GM12878 (cell line): ENCODE measurements at regions of chr5 and their contacts with region 1.

Region 1: DNA sequence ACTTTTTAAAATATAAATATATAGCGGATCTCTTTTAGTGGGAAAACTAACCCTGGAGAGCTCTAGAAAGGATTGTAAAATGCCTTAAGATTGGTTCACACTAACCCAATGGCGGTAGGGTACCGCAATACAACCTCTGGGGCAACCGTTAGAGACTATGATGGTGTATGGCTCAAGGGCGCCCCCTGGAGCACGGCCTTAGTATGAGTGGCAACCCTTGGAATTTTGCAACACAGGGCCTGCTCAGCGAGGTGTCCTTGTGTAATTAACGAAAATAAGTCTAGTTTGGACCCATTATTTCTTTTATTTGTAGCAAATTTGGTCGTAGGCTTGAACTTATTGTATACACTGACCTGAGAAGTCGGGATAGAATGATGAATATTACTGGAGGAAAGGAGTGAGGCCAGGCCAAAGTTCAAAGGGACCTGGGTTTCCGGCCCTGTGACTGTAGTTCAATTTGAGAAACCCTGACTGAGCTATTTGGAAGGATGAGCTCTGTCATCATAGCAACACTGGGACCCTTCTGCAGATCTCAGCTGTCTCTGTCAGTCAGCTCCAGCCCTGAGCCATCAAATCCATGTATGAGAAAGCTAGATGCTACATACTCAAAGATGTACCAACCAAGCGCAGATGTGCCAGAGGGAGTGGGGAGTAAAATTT is 54.8 kb downstream of the CAMK4 start:
- DNase-seq: peak; percentile 33
- ATAC-seq: peak; percentile 97
- H3K4me3 ChIP-seq: no peak overlapping the region
- H3K27ac ChIP-seq: no peak overlapping the region
- H3K4me1 ChIP-seq: 0 out of 2 replicates have a peak, but pooled peaks cover 4% of the 10 kb centered on the region
- H3K27me3 ChIP-seq: no peaks in the 10 kb centered on the region
- CTCF ChIP-seq: peak; percentile 76 to 93 (median 79)
- EP300 ChIP-seq: no peak
- POLR2A ChIP-seq: no peak
- RAD21 ChIP-seq: peak; percentile 80

Region 2: DNA sequence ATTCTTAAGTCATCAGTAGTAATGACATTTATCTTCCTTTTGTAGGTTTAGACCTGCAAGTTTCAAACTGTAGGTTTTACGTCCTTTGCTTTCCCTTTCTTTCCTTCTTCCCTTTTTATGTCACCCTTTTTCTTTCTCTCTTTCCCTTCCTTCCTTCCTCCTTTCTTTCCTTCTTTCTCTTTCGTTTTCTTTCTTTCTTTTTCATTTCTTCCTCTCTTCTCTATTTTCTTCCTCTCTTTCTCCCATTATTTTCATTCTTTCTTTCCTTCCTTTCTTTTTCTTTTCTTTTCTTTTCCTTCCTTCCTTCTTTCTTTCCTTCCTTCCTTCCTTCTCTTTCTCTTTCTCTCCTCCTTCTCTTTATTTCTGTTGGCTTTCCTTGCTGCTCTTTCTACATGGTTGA is 127.0 kb before region 1 on chr5:
- CTCF ChIA-PET with region 1: interaction called, 339 read pairs
- POLR2A ChIA-PET with region 1: no interaction called
- RAD21 ChIA-PET with region 1: interaction called, 198 read pairs
- SMC1A ChIA-PET with region 1: interaction called, 324 read pairs
- in situ Hi-C with region 1: no loop called
- intact Hi-C with region 1: no loop called
- DNase-seq: no peak
- ATAC-seq: no peak
- H3K4me3 ChIP-seq: no peak overlapping the region
- H3K27ac ChIP-seq: no peak overlapping the region
- H3K4me1 ChIP-seq: no peaks in the 10 kb centered on the region
- H3K27me3 ChIP-seq: no peaks in the 10 kb centered on the region
- CTCF ChIP-seq: no peak
- EP300 ChIP-seq: no peak
- POLR2A ChIP-seq: no peak
- RAD21 ChIP-seq: no peak

Region 3: GRCh38 chr5:111169269-111169668 is 109.7 kb before region 1 on chr5:
- CTCF ChIA-PET with region 1: interaction called, 23 read pairs
- POLR2A ChIA-PET with region 1: no interaction called
- RAD21 ChIA-PET with region 1: interaction called, 198 read pairs
- SMC1A ChIA-PET with region 1: interaction called, 324 read pairs
- in situ Hi-C with region 1: loop called (anchors 5 kb)
- intact Hi-C with region 1: no loop called
- DNase-seq: no peak
- ATAC-seq: no peak
- H3K4me3 ChIP-seq: no peak overlapping the region
- H3K27ac ChIP-seq: no peak overlapping the region
- H3K4me1 ChIP-seq: no peaks in the 10 kb centered on the region
- H3K27me3 ChIP-seq: no peaks in the 10 kb centered on the region
- CTCF ChIP-seq: no peak
- EP300 ChIP-seq: no peak
- POLR2A ChIP-seq: no peak
- RAD21 ChIP-seq: no peak

Region 4: DNA sequence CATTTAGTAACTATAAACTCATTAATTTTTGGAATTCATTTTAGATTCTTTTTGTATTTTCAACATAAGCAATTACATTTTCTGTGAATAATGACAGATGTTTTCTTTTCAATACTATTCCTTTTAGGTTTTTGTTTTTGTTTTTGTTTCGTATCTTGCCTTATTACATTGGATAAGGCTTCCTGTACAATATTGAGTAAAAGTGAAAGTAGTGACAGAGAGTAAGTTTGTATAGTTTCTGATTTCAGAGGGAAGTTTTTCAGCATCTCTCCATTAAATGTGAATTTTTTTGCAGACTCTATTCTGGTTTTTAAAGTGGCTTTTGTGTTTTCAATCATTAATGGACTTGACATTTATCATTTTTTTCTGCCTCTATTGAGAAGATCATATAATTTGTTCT is 67.6 kb before region 1 on chr5:
- CTCF ChIA-PET with region 1: interaction called, 10 read pairs
- POLR2A ChIA-PET with region 1: no interaction called
- RAD21 ChIA-PET with region 1: interaction called, 4 read pairs
- SMC1A ChIA-PET with region 1: interaction called, 9 read pairs
- in situ Hi-C with region 1: no loop called
- intact Hi-C with region 1: no loop called
- DNase-seq: no peak
- ATAC-seq: peak; percentile 95
- H3K4me3 ChIP-seq: no peak overlapping the region
- H3K27ac ChIP-seq: no peak overlapping the region
- H3K4me1 ChIP-seq: no peaks in the 10 kb centered on the region
- H3K27me3 ChIP-seq: no peaks in the 10 kb centered on the region
- CTCF ChIP-seq: no peak
- EP300 ChIP-seq: no peak
- POLR2A ChIP-seq: no peak
- RAD21 ChIP-seq: no peak

Region 5: DNA sequence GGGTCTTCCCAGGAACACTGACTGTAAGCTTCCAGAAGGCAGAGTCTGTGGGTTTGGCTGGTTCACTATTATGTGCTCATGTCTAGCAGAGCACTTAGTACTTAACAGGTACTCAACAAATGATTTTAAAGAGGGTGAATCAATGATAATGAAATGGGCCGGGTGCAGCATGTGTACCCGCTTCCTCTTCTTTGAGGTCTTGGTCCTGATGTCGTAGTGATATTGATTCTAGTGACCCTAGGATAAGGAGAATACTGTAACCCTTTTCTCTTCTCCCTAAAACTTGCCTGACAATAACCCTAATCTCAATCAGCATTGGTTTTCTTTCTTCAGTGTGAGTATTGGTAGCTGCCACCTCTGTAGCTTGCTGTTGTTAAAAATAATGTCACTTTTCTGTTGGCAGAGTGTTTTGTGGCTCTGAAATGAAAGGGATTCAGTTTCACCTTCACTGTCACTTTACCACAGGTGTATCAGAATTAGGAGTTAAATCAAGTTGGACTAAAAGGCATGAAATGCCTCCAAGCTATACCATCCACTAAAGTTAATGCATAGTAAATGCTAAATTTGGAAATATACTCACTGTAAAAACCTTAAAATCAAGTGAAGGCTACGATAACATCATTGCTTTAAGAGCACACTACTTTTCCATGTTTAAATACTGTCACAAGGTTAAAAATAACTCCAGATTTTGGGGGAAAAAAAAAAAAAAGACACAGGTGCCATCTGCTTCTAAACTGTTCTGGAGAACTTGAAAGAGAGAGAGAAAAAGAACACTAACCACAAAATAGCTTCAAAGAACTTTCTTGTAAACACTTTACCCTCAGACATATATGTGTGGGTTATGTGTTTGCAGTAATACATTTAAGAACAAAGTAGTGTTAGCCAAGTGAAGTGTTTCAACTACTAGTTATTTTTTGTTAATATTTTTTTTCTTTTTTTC is 48.8 kb before region 1 on chr5:
- CTCF ChIA-PET with region 1: interaction called, 109 read pairs
- POLR2A ChIA-PET with region 1: interaction called, 7 read pairs
- RAD21 ChIA-PET with region 1: interaction called, 62 read pairs
- SMC1A ChIA-PET with region 1: interaction called, 157 read pairs
- in situ Hi-C with region 1: no loop called
- intact Hi-C with region 1: loop called (anchors 1 kb)
- DNase-seq: no peak
- ATAC-seq: peak; percentile 47
- H3K4me3 ChIP-seq: peak overlapping the region; percentile 62
- H3K27ac ChIP-seq: peak overlapping the region; percentile 85
- H3K4me1 ChIP-seq: peaks cover 54% of the 10 kb centered on the region
- H3K27me3 ChIP-seq: no peaks in the 10 kb centered on the region
- CTCF ChIP-seq: no peak
- EP300 ChIP-seq: peak; percentile 45 to 52; a peak in 2 of 4 replicates
- POLR2A ChIP-seq: no peak
- RAD21 ChIP-seq: no peak

Region 6: DNA sequence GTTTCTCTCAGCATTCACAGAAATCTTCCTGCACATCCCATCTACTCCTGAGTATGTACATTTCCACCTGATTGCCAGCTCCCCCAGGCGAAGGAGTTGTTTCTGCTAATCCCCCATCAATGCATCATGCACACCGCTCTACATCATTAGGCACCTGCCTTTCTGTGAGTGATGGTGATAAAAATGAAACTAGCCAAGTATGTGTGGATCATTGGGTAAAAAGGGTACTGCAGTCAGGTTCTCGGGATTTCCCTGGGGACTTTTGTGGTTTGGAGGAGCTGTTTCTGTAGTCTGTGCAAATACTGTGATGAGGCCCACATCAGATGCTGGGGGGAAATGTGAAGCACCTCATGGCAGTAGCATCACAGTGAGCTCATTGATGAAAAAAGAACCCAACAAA is 24.4 kb before region 1 on chr5:
- CTCF ChIA-PET with region 1: interaction called, 25 read pairs
- POLR2A ChIA-PET with region 1: no interaction called
- RAD21 ChIA-PET with region 1: interaction called, 33 read pairs
- SMC1A ChIA-PET with region 1: interaction called, 44 read pairs
- in situ Hi-C with region 1: no loop called
- intact Hi-C with region 1: no loop called
- DNase-seq: peak; percentile 95
- ATAC-seq: peak; percentile 81
- H3K4me3 ChIP-seq: 0 out of 2 replicates have a peak overlapping the region, but pooled peaks have one; percentile 44
- H3K27ac ChIP-seq: peak overlapping the region; percentile 83
- H3K4me1 ChIP-seq: peaks cover 46% of the 10 kb centered on the region
- H3K27me3 ChIP-seq: no peaks in the 10 kb centered on the region
- CTCF ChIP-seq: no peak
- EP300 ChIP-seq: peak; percentile 94
- POLR2A ChIP-seq: peak; percentile 66
- RAD21 ChIP-seq: peak; percentile 30; the same call in 1 of the 2 replicates

Region 7: DNA sequence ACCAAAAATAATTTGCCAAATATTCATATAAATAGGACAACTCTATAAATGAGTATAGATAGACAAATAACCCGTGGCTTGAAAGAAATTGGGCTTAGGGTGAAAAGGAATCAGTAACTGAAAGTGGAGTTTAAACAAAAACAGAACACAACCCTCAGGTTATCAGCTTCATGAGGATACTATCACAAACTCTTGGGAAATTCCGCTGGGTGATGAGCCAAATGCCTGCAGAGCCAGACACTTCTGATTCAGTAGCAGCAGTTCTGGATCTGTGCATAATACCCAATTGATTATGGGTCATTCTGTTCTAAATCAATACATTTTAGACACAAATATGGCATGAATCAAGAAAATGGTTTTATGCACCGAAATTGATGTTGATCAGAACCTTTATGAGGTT is 17.6 kb after region 1 on chr5:
- CTCF ChIA-PET with region 1: interaction called, 9 read pairs
- POLR2A ChIA-PET with region 1: no interaction called
- RAD21 ChIA-PET with region 1: no interaction called
- SMC1A ChIA-PET with region 1: interaction called, 19 read pairs
- in situ Hi-C with region 1: no loop called
- intact Hi-C with region 1: no loop called
- DNase-seq: no peak
- ATAC-seq: peak; percentile 38
- H3K4me3 ChIP-seq: no peak overlapping the region
- H3K27ac ChIP-seq: no peak overlapping the region
- H3K4me1 ChIP-seq: no peaks in the 10 kb centered on the region
- H3K27me3 ChIP-seq: no peaks in the 10 kb centered on the region
- CTCF ChIP-seq: no peak
- EP300 ChIP-seq: no peak
- POLR2A ChIP-seq: no peak
- RAD21 ChIP-seq: no peak

Region 8: DNA sequence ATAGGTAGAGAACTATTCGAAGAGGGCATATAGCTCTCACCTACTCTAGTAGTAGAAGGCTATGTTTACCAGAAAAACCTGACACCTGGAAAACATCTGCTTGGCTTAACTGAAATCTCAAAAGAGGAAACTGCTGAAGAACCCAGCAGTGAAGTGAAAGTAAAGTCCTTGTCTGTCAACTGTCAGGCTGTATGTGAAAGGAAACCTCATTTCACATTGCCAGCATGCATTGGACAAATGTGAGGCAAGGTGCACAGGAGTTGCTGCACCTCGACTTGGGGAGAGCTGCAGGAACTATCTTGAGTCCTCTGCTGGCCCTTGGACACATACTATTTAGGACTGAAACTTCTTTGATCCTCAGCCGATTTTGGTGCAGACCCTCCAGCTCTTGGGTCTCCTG is 424.7 kb after region 1 on chr5:
- CTCF ChIA-PET with region 1: no interaction called
- POLR2A ChIA-PET with region 1: no interaction called
- RAD21 ChIA-PET with region 1: no interaction called
- SMC1A ChIA-PET with region 1: no interaction called
- in situ Hi-C with region 1: no loop called
- intact Hi-C with region 1: no loop called
- DNase-seq: peak; percentile 71
- ATAC-seq: peak; percentile 98
- H3K4me3 ChIP-seq: peak overlapping the region; percentile 29; the same call in 1 of the 2 replicates
- H3K27ac ChIP-seq: no peak overlapping the region
- H3K4me1 ChIP-seq: peaks cover 13% of the 10 kb centered on the region
- H3K27me3 ChIP-seq: no peaks in the 10 kb centered on the region
- CTCF ChIP-seq: no peak
- EP300 ChIP-seq: no peak
- POLR2A ChIP-seq: no peak
- RAD21 ChIP-seq: no peak